Body of pancreas (tissue), 4 donors: ENCODE measurements at regions of chr16 and their contacts with region 1.

Region 1: DNA sequence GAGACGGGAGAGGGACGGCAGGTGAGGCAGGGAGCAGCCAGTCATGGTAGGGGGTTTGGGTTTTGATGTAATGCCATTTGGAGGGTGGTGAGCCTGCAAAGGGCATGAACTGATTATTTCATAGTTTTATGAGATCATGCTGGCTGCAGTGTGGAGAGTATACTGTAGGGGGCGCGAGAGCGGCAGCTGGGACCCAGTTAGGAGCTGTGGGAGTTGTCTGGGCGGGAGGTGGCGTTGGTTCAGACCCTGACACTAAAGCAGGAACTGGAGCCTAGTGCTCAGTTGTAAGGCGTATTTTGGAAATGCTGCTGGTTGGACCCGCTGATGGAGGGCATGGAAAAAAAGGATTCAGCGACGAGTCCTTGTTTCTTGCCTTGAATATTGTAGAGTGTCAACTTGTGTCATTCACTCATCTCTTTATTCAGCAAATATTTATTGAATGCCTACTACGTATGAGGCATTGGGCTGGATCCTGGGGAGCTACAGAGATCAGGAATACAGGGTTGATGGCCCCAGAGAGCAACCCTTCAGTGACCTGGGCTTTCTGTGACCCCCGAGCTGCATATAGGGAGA is 23.7 kb upstream of the KDM8 start:
- DNase-seq: peak; percentile 91 to 95 (median 94)
- ATAC-seq: peak; percentile 98
- H3K4me3 ChIP-seq: no peak overlapping the region
- H3K27ac ChIP-seq: no peak overlapping the region
- H3K4me1 ChIP-seq: peaks cover 9% of the 10 kb centered on the region
- H3K27me3 ChIP-seq: no peaks in the 10 kb centered on the region
- CTCF ChIP-seq: peak; percentile 94 to 99 (median 97)
- POLR2A ChIP-seq: no peak

Region 2: GRCh38 chr16:27235055-27235937 is 55.7 kb after region 1 on chr16:
- intact Hi-C with region 1: loop called (anchors 5 kb)
- DNase-seq: peak; percentile 67 to 81 (median 72)
- ATAC-seq: peak; percentile 65
- H3K4me3 ChIP-seq: no peak overlapping the region
- H3K27ac ChIP-seq: peak overlapping the region in 3 of 4 donors; percentile 15 to 46 (median 23)
- H3K4me1 ChIP-seq: peaks cover 32% of the 10 kb centered on the region
- H3K27me3 ChIP-seq: no peaks in the 10 kb centered on the region
- CTCF ChIP-seq: peak; percentile 55 to 81 (median 75)
- POLR2A ChIP-seq: no peak

Region 3: GRCh38 chr16:27374804-27375425 is 195.3 kb after region 1 on chr16:
- intact Hi-C with region 1: loop called (anchors 5 kb)
- DNase-seq: peak; percentile 37 to 52 (median 40)
- ATAC-seq: peak; percentile 76
- H3K4me3 ChIP-seq: no peak overlapping the region
- H3K27ac ChIP-seq: no peak overlapping the region
- H3K4me1 ChIP-seq: no peaks in the 10 kb centered on the region
- H3K27me3 ChIP-seq: no peaks in the 10 kb centered on the region
- CTCF ChIP-seq: peak in 5 of 7 experiments; percentile 18 to 40 (median 32)
- POLR2A ChIP-seq: peak in 1 of 3 donors; percentile 18

Region 4: DNA sequence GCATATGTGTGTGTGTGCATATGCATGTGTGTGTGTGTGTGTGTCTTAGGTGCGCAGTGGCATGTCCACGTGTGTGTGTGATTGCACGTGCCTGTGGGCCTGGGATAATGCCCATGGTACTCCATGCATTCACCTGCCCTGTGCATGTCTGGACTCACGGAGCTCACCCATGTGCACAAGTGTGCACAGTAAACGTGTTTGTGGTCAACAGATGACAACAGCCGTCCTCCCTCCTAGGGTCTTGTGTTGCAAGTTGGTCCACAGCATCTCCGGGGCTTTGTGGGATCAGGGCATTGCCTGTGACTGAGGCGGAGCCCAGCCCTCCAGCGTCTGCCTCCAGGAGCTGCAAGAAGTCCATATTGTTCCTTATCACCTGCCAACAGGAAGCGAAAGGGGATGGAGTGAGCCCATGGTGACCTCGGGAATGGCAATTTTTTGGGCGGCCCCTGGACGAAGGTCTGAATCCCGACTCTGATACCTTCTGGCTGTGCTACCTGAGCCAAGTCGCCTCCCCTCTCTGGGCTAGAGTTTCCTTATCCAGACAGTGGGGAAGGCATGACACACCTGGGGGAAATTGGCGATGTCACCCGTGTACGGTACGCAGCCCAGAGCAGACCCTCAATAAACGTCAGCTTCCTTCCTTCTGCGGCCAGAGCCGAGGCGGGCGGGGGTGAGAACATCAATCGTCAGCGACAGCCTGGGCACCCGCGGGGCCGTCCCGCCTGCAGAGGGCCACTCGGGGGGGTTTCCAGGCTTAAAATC is 270.0 kb after region 1 on chr16:
- intact Hi-C with region 1: loop called (anchors 10 kb)
- DNase-seq: peak in 1 of 4 donors; percentile 20
- ATAC-seq: no peak
- H3K4me3 ChIP-seq: no peak overlapping the region
- H3K27ac ChIP-seq: no peak overlapping the region
- H3K4me1 ChIP-seq: no peaks in the 10 kb centered on the region
- H3K27me3 ChIP-seq: no peaks in the 10 kb centered on the region
- CTCF ChIP-seq: no peak
- POLR2A ChIP-seq: no peak